ENCODE measurements at regions of chr3 and their contacts with region 1.

Region 1: DNA sequence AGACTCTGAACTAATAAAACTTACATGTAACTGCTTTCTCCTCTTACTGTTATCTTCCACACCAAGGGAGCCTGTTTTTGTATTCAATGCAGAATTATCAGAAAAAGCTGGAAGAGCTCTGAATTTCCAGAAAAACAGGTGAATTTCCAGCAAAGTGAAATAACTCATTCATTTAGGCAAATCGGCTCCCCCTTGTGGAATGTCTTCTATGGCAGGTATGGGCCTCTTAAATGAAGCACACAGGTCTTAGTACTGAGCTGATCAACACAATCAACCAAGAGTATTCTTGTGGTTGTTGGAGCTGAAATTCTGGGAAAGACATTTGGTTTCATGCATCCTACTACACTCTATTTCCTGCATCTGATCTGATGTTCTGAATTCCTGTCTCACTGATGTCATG is 31.0 kb upstream of the PTPRG start:
- DNase-seq: no peak
- H3K4me3 ChIP-seq: no peak overlapping the region
- H3K27ac ChIP-seq: no peak overlapping the region
- H3K4me1 ChIP-seq: peaks cover 0 to 4% (median 0%) of the 10 kb centered on the region in 4 experiments; a peak in 1 of 7 replicates
- H3K27me3 ChIP-seq: no peaks in the 10 kb centered on the region; a peak in 1 of 7 replicates
- CTCF ChIP-seq: peak in 2 of 3 experiments; percentile 51 to 78; a peak in 3 of 4 replicates
- EP300 ChIP-seq: no peak
- POLR2A ChIP-seq: no peak
- RAD21 ChIP-seq: peak; percentile 65 to 67

Region 2: GRCh38 chr3:61401359-61401758 is 129.0 kb before region 1 on chr3:
- CTCF ChIA-PET with region 1: no interaction called
- POLR2A ChIA-PET with region 1: no interaction called
- DNase-seq: no peak
- H3K4me3 ChIP-seq: no peak overlapping the region
- H3K27ac ChIP-seq: no peak overlapping the region
- H3K4me1 ChIP-seq: no peaks in the 10 kb centered on the region
- H3K27me3 ChIP-seq: no peaks in the 10 kb centered on the region
- CTCF ChIP-seq: no peak
- EP300 ChIP-seq: no peak
- POLR2A ChIP-seq: no peak
- RAD21 ChIP-seq: no peak

Region 3: GRCh38 chr3:61505197-61505596 is 25.2 kb before region 1 on chr3:
- CTCF ChIA-PET with region 1: interaction called, 12 read pairs
- POLR2A ChIA-PET with region 1: no interaction called
- DNase-seq: no peak
- H3K4me3 ChIP-seq: no peak overlapping the region
- H3K27ac ChIP-seq: no peak overlapping the region
- H3K4me1 ChIP-seq: no peaks in the 10 kb centered on the region
- H3K27me3 ChIP-seq: no peaks in the 10 kb centered on the region
- CTCF ChIP-seq: peak in 1 of 3 experiments; percentile 15; a peak in 2 of 4 replicates
- EP300 ChIP-seq: no peak
- POLR2A ChIP-seq: no peak
- RAD21 ChIP-seq: peak; percentile 26 to 42; a peak in 3 of 4 replicates